ENCODE measurements at regions of chr3 and their contacts with region 1.

Region 1: DNA sequence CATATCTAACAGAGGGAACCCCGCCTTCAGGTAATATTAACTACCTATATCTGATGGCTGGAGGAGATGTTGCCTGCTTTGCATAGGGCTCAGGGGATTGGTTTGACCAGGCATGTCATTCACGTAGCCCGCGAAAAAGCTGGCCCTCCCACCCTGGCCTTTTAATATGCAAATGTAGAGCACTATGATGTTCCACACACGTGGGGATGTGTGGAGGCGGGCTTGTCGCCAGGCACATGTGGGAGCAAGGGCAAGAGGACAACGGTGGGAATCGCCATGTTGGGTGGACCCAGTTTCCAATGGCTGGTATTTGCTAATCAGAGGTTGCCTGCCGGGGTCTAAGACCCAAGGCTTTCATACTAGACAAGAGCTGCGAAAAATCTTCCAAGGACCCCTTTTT is 469.8 kb downstream of the ZPLD1 start:
- DNase-seq: no peak
- H3K4me3 ChIP-seq: no peak overlapping the region
- H3K27ac ChIP-seq: no peak overlapping the region
- H3K4me1 ChIP-seq: no peaks in the 10 kb centered on the region
- H3K27me3 ChIP-seq: no peaks in the 10 kb centered on the region
- CTCF ChIP-seq: no peak
- POLR2A ChIP-seq: no peak

Region 2: DNA sequence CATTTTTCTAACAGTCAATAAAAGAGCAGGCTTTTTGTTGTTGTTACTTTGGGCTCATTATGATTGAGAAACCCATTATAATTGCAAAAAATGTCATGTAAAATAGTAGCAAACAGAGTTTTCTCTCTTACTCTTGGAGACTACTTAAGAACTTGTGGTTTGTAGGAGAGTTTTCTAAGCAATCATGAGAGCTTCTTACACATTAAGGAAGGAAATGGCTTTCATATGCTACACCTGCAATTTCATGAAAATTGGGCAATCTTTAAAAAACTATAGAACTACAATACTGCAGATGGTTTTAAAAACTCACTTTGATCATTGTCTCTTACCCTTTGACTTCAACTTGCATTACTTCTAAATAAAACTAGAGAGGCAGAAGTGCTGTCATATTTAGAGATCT is 232.0 kb after region 1 on chr3:
- CTCF ChIA-PET with region 1: no interaction called
- POLR2A ChIA-PET with region 1: no interaction called
- dilution Hi-C with region 1: no loop called
- intact Hi-C with region 1: loop called (anchors 5 kb)
- DNase-seq: no peak
- H3K4me3 ChIP-seq: no peak overlapping the region
- H3K27ac ChIP-seq: no peak overlapping the region
- H3K4me1 ChIP-seq: no peaks in the 10 kb centered on the region
- H3K27me3 ChIP-seq: no peaks in the 10 kb centered on the region
- CTCF ChIP-seq: no peak
- POLR2A ChIP-seq: no peak

Measured in endothelial cell of umbilical vein (primary cell).